ENCODE measurements at regions of chr11 and their contacts with region 1.

Region 1: DNA sequence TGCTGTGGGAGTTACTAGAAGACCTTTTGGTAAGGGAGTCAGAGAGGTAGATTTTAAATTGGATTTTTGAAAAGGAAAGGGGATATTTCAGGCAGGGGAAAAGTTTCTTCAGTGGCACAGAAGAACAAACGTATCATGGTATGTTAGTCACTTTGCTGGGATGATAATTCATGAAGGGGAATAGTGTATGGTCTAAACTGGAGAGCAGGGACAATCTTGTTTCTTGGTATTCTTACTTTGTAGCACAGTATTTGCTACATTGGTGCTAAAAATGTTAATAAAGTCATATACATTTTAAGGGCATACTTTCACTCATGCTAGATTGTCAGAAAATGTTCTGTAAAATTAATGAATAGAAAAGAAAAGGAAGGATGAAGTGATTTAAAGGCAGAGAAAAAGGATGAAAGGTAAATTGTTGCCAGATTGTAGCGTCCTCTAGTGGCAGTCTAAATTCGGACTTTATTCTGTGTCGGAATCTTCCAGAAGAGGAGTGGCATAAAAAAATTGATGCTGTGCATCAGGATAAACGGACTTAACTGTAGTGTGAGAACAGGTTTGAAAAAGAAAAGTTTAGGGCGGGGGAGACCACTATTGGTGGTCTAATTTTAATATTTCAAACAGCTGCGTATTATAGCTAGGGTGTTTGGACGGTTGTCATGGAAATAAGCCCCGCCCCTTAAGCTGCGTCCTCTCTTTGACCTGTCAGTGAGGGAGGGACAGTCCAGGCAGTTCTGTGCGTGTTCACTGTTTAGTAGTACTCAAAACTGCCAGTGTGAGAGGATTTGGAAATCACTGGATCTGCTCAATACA is at the start of gene BCO2:
- DNase-seq: peak; percentile 62
- ATAC-seq: peak; percentile 87
- H3K4me3 Mint-ChIP-seq: peak within 1 kb of the TSS; percentile 58
- H3K27ac Mint-ChIP-seq: no peak within 1 kb of the TSS
- H3K4me1 Mint-ChIP-seq: peaks cover 19% of the 10 kb centered on the region
- H3K27me3 Mint-ChIP-seq: peaks cover 33% of the 10 kb centered on the region
- total RNA-seq, gene BCO2: 1.3 to 2.3 TPM

Region 2: DNA sequence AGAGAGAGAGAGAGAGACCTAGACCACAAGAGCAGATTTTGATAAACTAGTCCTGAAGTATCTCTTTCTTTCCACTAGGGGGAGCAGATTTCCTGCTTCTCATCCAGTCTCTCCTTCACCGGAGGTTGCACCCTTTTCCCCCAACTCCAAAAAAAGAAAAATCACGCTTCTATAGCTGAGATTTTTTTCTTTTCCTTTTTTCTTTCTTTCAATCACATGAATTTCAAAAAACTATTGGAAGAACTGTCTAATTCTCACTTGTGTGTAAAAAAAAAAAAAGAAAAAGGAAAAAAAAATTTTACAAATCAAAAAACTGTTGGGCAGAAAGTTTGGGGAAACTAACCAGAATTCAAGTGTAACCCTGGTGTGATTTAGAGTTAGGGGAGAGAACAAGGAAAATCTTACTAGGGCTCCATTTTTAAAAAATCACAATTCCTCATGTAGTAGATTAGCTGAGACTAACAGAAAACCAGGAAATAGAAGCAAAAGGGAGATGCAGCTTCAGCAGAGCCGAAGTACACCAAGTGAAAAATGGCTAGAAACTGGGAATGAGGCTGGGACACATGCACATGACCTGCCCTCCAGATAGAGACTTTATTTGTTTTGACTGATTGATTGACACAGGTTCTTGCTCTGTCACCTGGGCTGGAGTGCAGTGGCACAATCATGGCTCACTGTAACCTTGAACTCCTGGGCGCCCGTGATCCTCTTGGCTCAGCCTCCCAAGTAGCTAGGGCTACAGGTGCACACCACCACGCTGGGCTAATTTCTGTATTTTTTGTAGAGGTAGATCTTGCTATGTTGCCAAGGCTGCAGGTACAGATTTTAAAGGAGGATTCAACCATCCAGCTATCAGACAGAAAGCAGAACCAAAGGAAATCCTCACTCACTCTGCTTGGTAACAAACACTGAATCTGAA is 61.2 kb before region 1 on chr11:
- CTCF ChIA-PET with region 1: interaction called, 15 read pairs
- DNase-seq: no peak
- ATAC-seq: peak; percentile 57
- H3K4me3 Mint-ChIP-seq: no peak overlapping the region
- H3K27ac Mint-ChIP-seq: no peak overlapping the region
- H3K4me1 Mint-ChIP-seq: peaks cover 24% of the 10 kb centered on the region
- H3K27me3 Mint-ChIP-seq: no peaks in the 10 kb centered on the region

Region 3: GRCh38 chr11:112241486-112241885 is 66.5 kb after region 1 on chr11:
- CTCF ChIA-PET with region 1: no interaction called
- DNase-seq: no peak
- ATAC-seq: no peak
- H3K4me3 Mint-ChIP-seq: no peak overlapping the region
- H3K27ac Mint-ChIP-seq: no peak overlapping the region
- H3K4me1 Mint-ChIP-seq: no peaks in the 10 kb centered on the region
- H3K27me3 Mint-ChIP-seq: no peaks in the 10 kb centered on the region

Measured in activated CD8-positive, alpha-beta memory T cell treated with anti-CD3 and anti-CD28 coated beads, Interleukin-2, amount 10 ng/mL, durations not matched to agents 7 days and 5 days (primary cell).